ENCODE measurements at regions of chr12 and their contacts with region 1.

Region 1: GRCh38 chr12:113665457-113665856 is 193.8 kb upstream of the LHX5 start:
- DNase-seq: no peak
- H3K4me3 ChIP-seq: no peak overlapping the region
- H3K27ac ChIP-seq: no peak overlapping the region
- H3K4me1 ChIP-seq: peaks cover 0 to 13% (median 5%) of the 10 kb centered on the region in 4 experiments; a peak in 3 of 7 replicates
- H3K27me3 ChIP-seq: no peaks in the 10 kb centered on the region; a peak in 1 of 7 replicates
- CTCF ChIP-seq: no peak
- EP300 ChIP-seq: no peak
- POLR2A ChIP-seq: no peak
- RAD21 ChIP-seq: no peak

Region 2: DNA sequence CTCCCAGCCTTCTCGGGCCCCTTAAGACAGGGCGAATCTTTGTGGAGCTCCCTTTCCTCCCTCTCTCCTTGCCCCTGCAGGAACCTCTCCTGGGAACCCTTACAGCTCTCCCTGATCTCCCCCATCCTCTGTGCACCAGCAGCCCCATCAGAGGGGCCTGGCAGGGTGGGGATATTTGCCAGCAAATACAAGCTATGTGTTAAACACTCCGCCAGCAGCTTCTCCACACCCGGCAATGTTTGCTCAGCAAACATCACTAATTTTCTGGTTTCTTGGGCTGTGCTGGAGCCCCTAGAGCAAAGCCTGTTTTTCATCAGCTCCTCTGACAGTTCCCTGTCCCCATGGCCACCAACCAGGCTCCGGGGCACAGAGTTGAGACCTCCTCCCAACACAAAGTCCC is 46.3 kb before region 1 on chr12:
- CTCF ChIA-PET with region 1: no interaction called
- POLR2A ChIA-PET with region 1: no interaction called
- DNase-seq: no peak
- H3K4me3 ChIP-seq: no peak overlapping the region
- H3K27ac ChIP-seq: no peak overlapping the region
- H3K4me1 ChIP-seq: no peaks in the 10 kb centered on the region; a peak in 1 of 7 replicates
- H3K27me3 ChIP-seq: no peaks in the 10 kb centered on the region; a peak in 1 of 7 replicates
- CTCF ChIP-seq: no peak
- EP300 ChIP-seq: no peak
- POLR2A ChIP-seq: no peak
- RAD21 ChIP-seq: no peak

Region 3: DNA sequence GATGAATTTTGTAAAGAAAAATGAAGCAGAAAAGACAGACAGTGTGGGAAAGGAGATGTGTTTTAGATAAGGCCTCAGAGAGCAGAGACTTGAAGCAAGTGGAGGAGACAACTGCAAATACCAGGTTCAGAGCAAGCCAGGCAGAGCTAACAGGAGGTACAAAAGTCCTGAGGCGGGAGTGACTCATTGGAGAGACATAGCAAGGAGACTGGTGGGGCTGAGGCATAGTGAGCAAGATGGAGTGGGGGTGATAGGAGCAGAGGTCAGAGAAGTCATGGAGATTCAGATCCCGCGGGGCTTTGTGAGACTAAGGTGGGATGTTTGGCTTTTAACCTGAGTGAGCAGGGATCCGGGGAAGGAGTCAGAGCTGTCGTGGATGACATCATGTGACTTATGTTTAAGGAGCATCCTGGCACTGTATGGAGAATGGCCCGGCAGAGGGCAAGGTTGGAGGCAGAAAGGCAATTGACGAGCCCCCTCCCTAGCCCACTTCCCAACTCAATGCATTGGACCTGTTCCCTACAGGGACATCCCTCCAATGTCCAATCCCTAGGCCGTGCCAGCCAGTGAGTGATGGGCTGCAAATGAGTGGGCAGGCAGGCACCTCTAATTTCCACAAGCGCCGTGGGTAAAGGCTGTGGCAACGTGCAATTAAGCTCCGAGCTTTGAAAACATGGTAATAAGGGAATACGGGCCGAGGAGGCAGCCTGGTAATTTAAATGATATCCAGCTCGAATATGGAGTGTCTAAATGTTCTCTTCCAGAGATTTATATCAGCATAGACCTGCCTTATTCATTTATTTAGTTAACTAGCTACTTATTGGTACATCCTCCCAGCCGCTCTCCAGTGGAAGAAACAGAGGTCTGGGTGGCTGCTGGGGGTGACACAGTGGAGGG is 13.0 kb after region 1 on chr12:
- CTCF ChIA-PET with region 1: interaction called, 10 read pairs
- POLR2A ChIA-PET with region 1: no interaction called
- DNase-seq: no peak
- H3K4me3 ChIP-seq: no peak overlapping the region
- H3K27ac ChIP-seq: no peak overlapping the region
- H3K4me1 ChIP-seq: no peaks in the 10 kb centered on the region
- H3K27me3 ChIP-seq: no peaks in the 10 kb centered on the region
- CTCF ChIP-seq: no peak
- EP300 ChIP-seq: no peak
- POLR2A ChIP-seq: no peak
- RAD21 ChIP-seq: no peak